ENCODE measurements at regions of chr6 and their contacts with region 1.

Region 1: GRCh38 chr6:154247119-154247861 is 109.3 kb downstream of the IPCEF1 start:
- DNase-seq: peak in 4 of 9 experiments; percentile 45 to 79 (median 60)
- ATAC-seq: peak; percentile 43
- H3K4me3 ChIP-seq: peak overlapping the region; percentile 60 to 69
- H3K4me3 Mint-ChIP-seq: peak overlapping the region; percentile 94
- H3K27ac ChIP-seq: peak overlapping the region; percentile 75 to 92
- H3K27ac Mint-ChIP-seq: peak overlapping the region; percentile 93
- H3K4me1 ChIP-seq: peaks cover 65% of the 10 kb centered on the region
- H3K4me1 Mint-ChIP-seq: peaks cover 83% of the 10 kb centered on the region
- H3K27me3 ChIP-seq: no peaks in the 10 kb centered on the region
- H3K27me3 Mint-ChIP-seq: no peaks in the 10 kb centered on the region
- CTCF ChIP-seq: no peak

Region 2: DNA sequence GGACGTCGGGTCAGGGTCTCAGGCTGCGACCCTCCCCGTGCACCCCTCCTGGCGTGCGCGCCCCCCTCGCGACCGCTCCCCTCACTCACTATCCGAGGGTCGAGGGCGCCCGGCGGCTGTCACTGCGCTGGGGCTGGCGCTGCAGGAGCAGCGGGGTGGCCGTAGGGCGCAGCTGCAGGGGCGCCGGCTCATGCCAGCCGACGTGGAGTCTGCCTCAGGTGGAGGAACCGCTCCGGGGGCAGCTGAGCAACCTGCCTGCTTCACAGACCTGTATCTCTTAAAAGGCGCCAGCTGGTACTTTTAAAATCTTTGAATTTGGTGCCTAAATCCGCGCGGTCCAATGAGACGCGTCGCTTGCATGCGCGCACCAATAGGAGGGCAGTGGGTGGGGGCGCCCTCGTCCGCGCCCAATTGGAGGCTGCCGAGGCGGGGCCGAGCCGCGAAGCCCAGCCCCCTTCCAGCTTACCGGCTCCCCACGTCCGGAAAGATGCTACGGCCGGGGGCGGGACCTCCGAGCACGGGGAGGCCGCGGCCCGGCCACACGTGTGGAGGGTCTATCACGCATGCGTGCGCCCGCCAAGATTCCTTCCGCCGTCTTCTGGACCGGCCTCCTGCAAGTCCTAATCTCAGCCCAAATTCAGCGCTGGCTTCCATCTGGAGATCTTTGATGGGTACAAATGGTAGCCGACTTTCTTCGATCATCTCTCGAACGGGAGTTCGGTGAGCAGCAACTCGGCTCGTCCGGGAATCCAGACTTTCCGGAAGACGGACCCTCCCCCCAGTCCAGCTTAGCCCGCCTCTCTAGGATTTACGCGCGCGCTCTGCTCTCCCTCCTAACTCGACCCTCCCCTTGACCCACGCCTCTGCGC is 1264.3 kb before region 1 on chr6 and contains the start of gene FBXO5:
- CTCF ChIA-PET with region 1: no interaction called
- POLR2A ChIA-PET with region 1: no interaction called
- intact Hi-C with region 1: loop called in 1 of 2 experiments (anchors 10 kb)
- DNase-seq: peak; percentile 94 to 99 (median 97)
- ATAC-seq: peak; percentile 93
- H3K4me3 ChIP-seq: peak within 1 kb of the TSS; percentile 70 to 85
- H3K4me3 Mint-ChIP-seq: peak within 1 kb of the TSS; percentile 99
- H3K27ac ChIP-seq: peak within 1 kb of the TSS; percentile 73 to 94
- H3K27ac Mint-ChIP-seq: peak within 1 kb of the TSS; percentile 97
- H3K4me1 ChIP-seq: peaks cover 18% of the 10 kb centered on the region
- H3K4me1 Mint-ChIP-seq: peaks cover 48% of the 10 kb centered on the region
- H3K27me3 ChIP-seq: no peaks in the 10 kb centered on the region
- H3K27me3 Mint-ChIP-seq: no peaks in the 10 kb centered on the region
- CTCF ChIP-seq: no peak
- total RNA-seq, gene FBXO5: 3.0 to 3.9 TPM

Region 3: GRCh38 chr6:154218301-154218700 is 29.0 kb before region 1 on chr6:
- CTCF ChIA-PET with region 1: interaction called, 4 read pairs
- POLR2A ChIA-PET with region 1: interaction called, 3 read pairs
- intact Hi-C with region 1: loop called in 1 of 2 experiments (anchors 5 kb)
- DNase-seq: peak in 1 of 9 experiments; percentile 24
- ATAC-seq: peak; percentile 44
- H3K4me3 ChIP-seq: no peak overlapping the region
- H3K4me3 Mint-ChIP-seq: peak overlapping the region; percentile 44
- H3K27ac ChIP-seq: peak overlapping the region in 1 of 2 experiments; percentile 27
- H3K27ac Mint-ChIP-seq: peak overlapping the region; percentile 88
- H3K4me1 ChIP-seq: peaks cover 44% of the 10 kb centered on the region
- H3K4me1 Mint-ChIP-seq: peaks cover 66% of the 10 kb centered on the region
- H3K27me3 ChIP-seq: no peaks in the 10 kb centered on the region
- H3K27me3 Mint-ChIP-seq: no peaks in the 10 kb centered on the region
- CTCF ChIP-seq: no peak

Region 4: GRCh38 chr6:154229786-154230185 is 17.5 kb before region 1 on chr6:
- CTCF ChIA-PET with region 1: interaction called, 7 read pairs
- POLR2A ChIA-PET with region 1: interaction called, 7 read pairs
- intact Hi-C with region 1: loop called (anchors 1 to 2 kb)
- DNase-seq: peak in 2 of 9 experiments; percentile 53 to 76
- ATAC-seq: peak; percentile 64
- H3K4me3 ChIP-seq: peak overlapping the region; percentile 11 to 47
- H3K4me3 Mint-ChIP-seq: peak overlapping the region; percentile 85
- H3K27ac ChIP-seq: peak overlapping the region; percentile 19 to 61
- H3K27ac Mint-ChIP-seq: peak overlapping the region; percentile 91
- H3K4me1 ChIP-seq: peaks cover 61% of the 10 kb centered on the region
- H3K4me1 Mint-ChIP-seq: peaks cover 85% of the 10 kb centered on the region
- H3K27me3 ChIP-seq: no peaks in the 10 kb centered on the region
- H3K27me3 Mint-ChIP-seq: no peaks in the 10 kb centered on the region
- CTCF ChIP-seq: no peak

Region 5: GRCh38 chr6:154267508-154268106 is 20.3 kb after region 1 on chr6:
- CTCF ChIA-PET with region 1: interaction called, 9 read pairs
- POLR2A ChIA-PET with region 1: interaction called, 7 read pairs
- intact Hi-C with region 1: loop called in 1 of 2 experiments (anchors 2 kb)
- DNase-seq: peak in 2 of 9 experiments; percentile 29 to 41
- ATAC-seq: peak; percentile 59
- H3K4me3 ChIP-seq: no peak overlapping the region
- H3K4me3 Mint-ChIP-seq: peak overlapping the region; percentile 59
- H3K27ac ChIP-seq: no peak overlapping the region
- H3K27ac Mint-ChIP-seq: peak overlapping the region; percentile 79
- H3K4me1 ChIP-seq: peaks cover 20% of the 10 kb centered on the region
- H3K4me1 Mint-ChIP-seq: peaks cover 28% of the 10 kb centered on the region
- H3K27me3 ChIP-seq: no peaks in the 10 kb centered on the region
- H3K27me3 Mint-ChIP-seq: no peaks in the 10 kb centered on the region
- CTCF ChIP-seq: no peak

Region 6: GRCh38 chr6:155314092-155314772 is 1066.9 kb after region 1 on chr6 and contains the start of gene TFB1M:
- CTCF ChIA-PET with region 1: no interaction called
- POLR2A ChIA-PET with region 1: no interaction called
- intact Hi-C with region 1: loop called in 1 of 2 experiments (anchors 5 kb)
- DNase-seq: peak; percentile 91 to 99 (median 97)
- ATAC-seq: peak; percentile 93
- H3K4me3 ChIP-seq: peak within 1 kb of the TSS; percentile 92 to 97
- H3K4me3 Mint-ChIP-seq: peak within 1 kb of the TSS; percentile 98
- H3K27ac ChIP-seq: peak within 1 kb of the TSS; percentile 83 to 87
- H3K27ac Mint-ChIP-seq: peak within 1 kb of the TSS; percentile 97
- H3K4me1 ChIP-seq: peaks cover 7% of the 10 kb centered on the region
- H3K4me1 Mint-ChIP-seq: peaks cover 35% of the 10 kb centered on the region
- H3K27me3 ChIP-seq: no peaks in the 10 kb centered on the region
- H3K27me3 Mint-ChIP-seq: no peaks in the 10 kb centered on the region
- CTCF ChIP-seq: no peak
- total RNA-seq, gene TFB1M: 6.3 to 7.9 TPM